Heart left ventricle (tissue), 16 donors: ENCODE measurements at regions of chr13 and their contacts with region 1.

Region 1: DNA sequence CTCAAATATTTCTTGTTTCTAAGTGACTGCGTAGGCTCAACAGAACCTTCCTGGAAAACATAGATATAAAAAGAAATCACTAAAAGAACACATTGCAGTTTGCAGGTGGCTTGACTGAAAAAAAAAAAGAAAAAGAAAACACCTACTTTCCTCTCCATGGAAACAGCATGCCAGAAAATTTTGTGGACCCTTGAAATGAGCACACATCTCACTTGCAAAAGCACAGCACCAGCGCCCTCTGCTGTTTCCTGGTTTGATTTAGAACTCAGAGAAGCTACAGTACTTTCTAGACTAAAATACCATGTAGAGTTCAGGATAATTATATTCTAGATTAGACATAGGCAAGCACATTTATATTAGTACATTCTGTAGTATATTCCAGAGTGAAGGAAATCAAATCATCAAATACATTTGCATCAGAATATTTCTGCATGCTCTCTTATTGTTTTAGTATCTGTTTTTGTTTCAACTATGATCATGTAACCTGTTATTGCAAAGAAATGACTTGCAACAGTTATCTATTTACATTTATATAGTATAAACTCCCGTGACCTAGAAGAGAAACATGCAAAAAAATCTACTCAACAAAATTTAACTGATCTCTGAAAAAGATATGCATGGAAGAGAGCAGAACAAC is 22.3 kb upstream of the XPO4 start:
- DNase-seq: peak in 4 of 5 donors; percentile 67 to 85 (median 70)
- ATAC-seq: peak in 3 of 4 donors; percentile 53 to 71 (median 56)
- H3K4me3 ChIP-seq: no peak overlapping the region
- H3K27ac ChIP-seq: no peak overlapping the region
- H3K4me1 ChIP-seq: no peaks in the 10 kb centered on the region
- H3K27me3 ChIP-seq: no peaks in the 10 kb centered on the region
- CTCF ChIP-seq: peak; percentile 59 to 85 (median 78)
- POLR2A ChIP-seq: no peak

Region 2: DNA sequence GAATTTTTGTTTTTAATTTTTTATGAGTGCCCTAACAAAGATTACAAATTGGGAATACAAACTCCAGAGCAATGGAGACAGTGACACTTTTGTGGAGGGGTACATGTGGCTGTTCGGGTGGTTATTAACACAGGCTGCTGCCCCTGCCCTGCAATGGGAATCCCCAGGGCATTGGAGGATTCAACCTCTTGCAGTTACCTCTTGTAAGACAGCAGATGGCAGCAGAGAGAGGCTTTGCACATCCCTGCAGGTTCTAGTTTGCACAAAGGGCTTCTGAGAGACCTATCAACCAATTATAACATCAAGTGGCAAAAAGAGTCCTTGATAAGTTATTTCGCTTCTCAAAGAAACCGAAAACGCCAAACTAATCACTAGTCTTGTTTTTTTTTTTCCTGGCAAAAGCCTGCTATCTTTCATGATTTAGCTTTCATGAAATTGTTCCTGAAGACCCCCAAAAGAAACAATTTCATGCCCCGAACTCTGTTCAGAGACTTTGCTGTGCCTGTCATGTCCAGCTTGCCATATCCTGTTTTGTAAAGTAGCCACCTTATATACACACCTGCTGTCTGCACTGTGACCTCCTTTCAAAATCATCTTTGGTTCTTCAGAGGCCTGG is 742.5 kb before region 1 on chr13:
- intact Hi-C with region 1: loop called in 8 of 10 experiments (anchors 5 to 10 kb)
- DNase-seq: peak in 1 of 5 donors; percentile 45
- ATAC-seq: peak; percentile 78 to 82 (median 80)
- H3K4me3 ChIP-seq: no peak overlapping the region
- H3K27ac ChIP-seq: no peak overlapping the region
- H3K4me1 ChIP-seq: peaks cover 0 to 6% (median 0%) of the 10 kb centered on the region in 12 donors
- H3K27me3 ChIP-seq: peaks cover 0 to 30% (median 3%) of the 10 kb centered on the region in 9 donors
- CTCF ChIP-seq: peak; percentile 70 to 88 (median 79)
- POLR2A ChIP-seq: no peak

Region 3: GRCh38 chr13:20192158-20192835 is 732.6 kb before region 1 on chr13:
- intact Hi-C with region 1: loop called in 5 of 10 experiments (anchors 5 to 10 kb)
- DNase-seq: no peak
- ATAC-seq: peak in 1 of 4 donors; percentile 8
- H3K4me3 ChIP-seq: peak overlapping the region; percentile 49 to 72 (median 59)
- H3K27ac ChIP-seq: no peak overlapping the region
- H3K4me1 ChIP-seq: peaks cover 5 to 30% (median 19%) of the 10 kb centered on the region in 12 donors
- H3K27me3 ChIP-seq: peaks cover 22 to 63% (median 30%) of the 10 kb centered on the region in 9 donors
- CTCF ChIP-seq: no peak
- POLR2A ChIP-seq: no peak

Region 4: DNA sequence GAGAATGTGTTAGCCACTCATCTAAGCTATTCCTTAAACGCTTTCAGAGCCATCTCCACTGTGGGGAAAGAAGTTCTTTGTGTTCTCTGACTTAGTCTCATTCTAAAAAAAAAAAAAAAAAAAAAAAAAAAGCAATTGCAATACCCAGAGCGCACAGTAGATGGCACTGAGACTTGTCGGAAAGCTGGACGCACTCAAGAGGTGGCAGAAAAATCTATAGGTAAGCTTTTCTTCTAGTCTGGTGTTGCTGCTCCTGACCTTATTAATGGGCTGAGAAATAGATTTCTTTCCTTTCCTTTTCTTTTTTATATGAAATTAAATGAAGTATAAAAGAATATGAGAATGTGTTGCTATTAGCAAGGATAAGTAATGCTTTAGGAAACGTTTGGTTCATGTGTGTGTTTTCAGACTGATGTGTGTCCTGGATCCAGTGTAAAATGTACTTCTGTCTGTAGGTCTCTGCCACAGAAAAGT is 727.5 kb before region 1 on chr13:
- intact Hi-C with region 1: loop called in 2 of 10 experiments (anchors 10 kb)
- DNase-seq: no peak
- ATAC-seq: peak in 2 of 4 donors; percentile 44 to 45
- H3K4me3 ChIP-seq: no peak overlapping the region
- H3K27ac ChIP-seq: no peak overlapping the region
- H3K4me1 ChIP-seq: peaks cover 5 to 22% (median 15%) of the 10 kb centered on the region in 12 donors
- H3K27me3 ChIP-seq: peaks cover 16 to 47% (median 29%) of the 10 kb centered on the region in 9 donors
- CTCF ChIP-seq: peak; percentile 56 to 77 (median 70)
- POLR2A ChIP-seq: no peak

Region 5: DNA sequence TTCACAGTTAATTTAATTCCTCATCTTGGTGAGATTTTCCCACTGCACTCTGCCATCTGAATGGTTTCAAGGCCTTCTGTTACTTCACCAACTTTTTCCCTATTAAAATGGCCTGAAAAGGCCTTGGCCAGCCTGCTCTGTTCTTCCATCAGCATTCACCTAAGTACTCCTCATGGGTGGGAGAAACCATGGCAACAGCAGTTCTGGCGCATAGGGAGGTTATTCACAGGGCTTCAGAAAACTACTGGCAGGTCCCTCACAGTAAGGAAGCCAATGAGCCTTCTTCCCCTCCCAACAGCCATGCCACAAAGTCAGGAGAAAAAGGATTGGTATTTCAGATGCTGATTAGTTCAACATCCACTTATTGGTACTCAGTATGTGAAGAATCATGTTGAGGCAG is 714.9 kb before region 1 on chr13:
- intact Hi-C with region 1: loop called in 1 of 10 experiments (anchors 10 kb)
- DNase-seq: no peak
- ATAC-seq: no peak
- H3K4me3 ChIP-seq: no peak overlapping the region
- H3K27ac ChIP-seq: no peak overlapping the region
- H3K4me1 ChIP-seq: no peaks in the 10 kb centered on the region
- H3K27me3 ChIP-seq: peaks cover 0 to 15% (median 4%) of the 10 kb centered on the region in 9 donors
- CTCF ChIP-seq: no peak
- POLR2A ChIP-seq: no peak

Region 6: DNA sequence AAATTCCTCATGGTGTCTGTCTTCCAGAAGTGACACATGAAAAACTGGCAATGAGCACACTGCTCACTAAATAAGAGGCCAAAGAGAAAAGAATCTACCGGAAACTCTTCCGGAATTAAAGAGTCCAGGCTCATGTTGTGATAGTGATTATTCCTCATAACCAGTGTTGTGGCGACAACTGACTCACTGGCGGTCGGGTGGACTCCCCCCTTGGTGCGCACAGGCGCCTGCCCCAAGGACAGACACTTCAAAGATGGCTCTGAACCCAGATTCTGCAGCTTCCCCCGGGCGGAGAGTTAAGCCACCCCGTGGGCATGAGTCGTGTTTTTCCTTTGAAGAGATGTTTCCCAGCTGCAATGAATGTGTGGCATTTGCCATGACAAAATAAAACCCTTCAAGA is 211.1 kb before region 1 on chr13:
- intact Hi-C with region 1: loop called (anchors 1 to 5 kb)
- DNase-seq: peak in 2 of 5 donors; percentile 59 to 63
- ATAC-seq: peak in 2 of 4 donors; percentile 49 to 56
- H3K4me3 ChIP-seq: peak overlapping the region in 3 of 12 donors; percentile 7 to 32 (median 14)
- H3K27ac ChIP-seq: peak overlapping the region in 11 of 12 donors; percentile 36 to 92 (median 65)
- H3K4me1 ChIP-seq: peaks cover 0 to 41% (median 19%) of the 10 kb centered on the region in 12 donors
- H3K27me3 ChIP-seq: no peaks in the 10 kb centered on the region
- CTCF ChIP-seq: no peak
- POLR2A ChIP-seq: no peak

Region 7: DNA sequence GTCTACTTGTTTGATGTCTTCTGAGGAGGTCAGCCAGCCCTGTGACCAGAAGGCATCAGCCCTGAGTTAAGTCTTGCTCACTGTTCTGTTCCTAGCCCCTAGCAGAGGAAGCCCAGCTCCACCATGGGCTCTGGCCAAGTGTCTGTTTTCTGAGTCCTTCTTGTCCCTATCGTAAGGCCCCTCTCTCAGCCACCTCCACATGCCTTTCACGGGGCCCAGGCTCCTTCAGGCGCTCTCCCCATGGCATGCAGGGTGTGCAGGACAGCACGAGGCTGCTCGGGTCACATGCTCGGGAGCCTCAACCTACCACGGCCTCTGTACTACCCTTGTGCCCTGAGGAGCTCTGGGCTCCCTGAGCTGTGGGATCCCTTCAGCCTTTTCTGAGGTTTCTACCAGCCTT is 184.3 kb after region 1 on chr13:
- intact Hi-C with region 1: no loop called
- DNase-seq: no peak
- ATAC-seq: no peak
- H3K4me3 ChIP-seq: no peak overlapping the region
- H3K27ac ChIP-seq: no peak overlapping the region
- H3K4me1 ChIP-seq: no peaks in the 10 kb centered on the region
- H3K27me3 ChIP-seq: no peaks in the 10 kb centered on the region
- CTCF ChIP-seq: no peak
- POLR2A ChIP-seq: no peak